Activated CD4-positive, alpha-beta memory T cell treated with anti-CD3 and anti-CD28 coated beads for 36 hours (primary cell): ENCODE measurements at regions of chr14 and their contacts with region 1.

Region 1: DNA sequence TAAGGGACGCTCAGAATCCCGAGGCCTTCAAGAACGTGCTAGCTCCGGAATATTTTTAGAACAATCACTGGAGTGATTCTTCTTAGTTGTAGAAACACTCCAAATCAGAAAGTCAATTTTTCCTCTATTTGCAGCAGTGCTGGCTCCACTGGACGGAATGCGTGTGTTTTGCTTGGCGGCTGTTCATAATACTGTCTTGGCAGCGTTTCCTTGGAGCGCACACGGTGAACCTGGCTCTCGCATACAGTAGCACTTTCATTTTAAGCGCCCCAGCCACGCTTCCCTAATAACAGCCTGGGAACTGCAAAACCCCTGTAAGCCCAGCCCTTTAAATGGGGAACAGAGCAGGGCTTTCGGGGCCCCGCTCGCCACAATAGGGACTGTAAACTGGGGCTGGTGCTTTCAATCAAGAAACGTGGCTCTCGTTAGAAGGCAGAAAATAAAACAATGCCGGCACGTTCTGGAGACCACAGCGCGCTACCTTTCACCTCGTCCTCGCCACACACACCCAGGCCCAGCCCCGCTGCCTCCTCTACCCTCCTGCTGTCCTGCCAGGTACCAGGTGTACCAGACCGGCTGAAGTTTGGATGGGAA is 79.9 kb downstream of the BCL11B start:
- DNase-seq: peak; percentile 56
- H3K4me3 Mint-ChIP-seq: peak overlapping the region; percentile 84
- H3K27ac Mint-ChIP-seq: peak overlapping the region; percentile 88
- H3K4me1 Mint-ChIP-seq: peaks cover 92% of the 10 kb centered on the region
- H3K27me3 Mint-ChIP-seq: no peaks in the 10 kb centered on the region

Region 2: GRCh38 chr14:98138666-98139065 is 1053.5 kb before region 1 on chr14:
- CTCF ChIA-PET with region 1: interaction called, 3 read pairs
- POLR2A ChIA-PET with region 1: no interaction called
- intact Hi-C with region 1: loop called (anchors 2 kb)
- DNase-seq: peak; percentile 73
- H3K4me3 Mint-ChIP-seq: peak overlapping the region; percentile 42
- H3K27ac Mint-ChIP-seq: peak overlapping the region; percentile 80
- H3K4me1 Mint-ChIP-seq: peaks cover 76% of the 10 kb centered on the region
- H3K27me3 Mint-ChIP-seq: no peaks in the 10 kb centered on the region

Region 3: GRCh38 chr14:98931911-98932310 is 260.2 kb before region 1 on chr14:
- CTCF ChIA-PET with region 1: interaction called, 3 read pairs
- POLR2A ChIA-PET with region 1: no interaction called
- intact Hi-C with region 1: loop called (anchors 5 kb)
- DNase-seq: peak; percentile 81
- H3K4me3 Mint-ChIP-seq: peak overlapping the region; percentile 49
- H3K27ac Mint-ChIP-seq: peak overlapping the region; percentile 71
- H3K4me1 Mint-ChIP-seq: peaks cover 58% of the 10 kb centered on the region
- H3K27me3 Mint-ChIP-seq: no peaks in the 10 kb centered on the region

Region 4: DNA sequence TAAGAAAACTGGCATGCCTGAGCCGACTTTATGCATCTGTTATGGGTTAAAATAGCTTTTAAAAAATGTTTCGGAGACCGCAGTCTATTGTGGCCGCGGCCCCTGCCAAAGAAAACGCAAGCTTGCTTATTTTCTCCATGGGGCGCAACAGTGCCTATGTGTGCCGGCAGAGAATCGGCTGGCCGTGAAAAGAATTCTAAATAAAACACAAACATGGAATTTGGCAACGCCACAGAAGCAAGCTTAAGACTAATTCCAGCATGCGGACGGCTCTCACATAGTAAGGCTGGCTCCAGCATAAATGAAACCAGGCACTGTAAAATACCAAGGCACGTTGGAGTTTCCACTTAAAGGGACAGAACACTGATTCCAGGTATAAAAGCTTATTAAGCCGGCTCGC is 23.2 kb after region 1 on chr14:
- CTCF ChIA-PET with region 1: interaction called, 10 read pairs
- POLR2A ChIA-PET with region 1: interaction called, 10 read pairs
- intact Hi-C with region 1: loop called (anchors 2 kb)
- DNase-seq: no peak
- H3K4me3 Mint-ChIP-seq: peak overlapping the region; percentile 70
- H3K27ac Mint-ChIP-seq: peak overlapping the region; percentile 91
- H3K4me1 Mint-ChIP-seq: peaks cover 93% of the 10 kb centered on the region
- H3K27me3 Mint-ChIP-seq: no peaks in the 10 kb centered on the region

Region 5: DNA sequence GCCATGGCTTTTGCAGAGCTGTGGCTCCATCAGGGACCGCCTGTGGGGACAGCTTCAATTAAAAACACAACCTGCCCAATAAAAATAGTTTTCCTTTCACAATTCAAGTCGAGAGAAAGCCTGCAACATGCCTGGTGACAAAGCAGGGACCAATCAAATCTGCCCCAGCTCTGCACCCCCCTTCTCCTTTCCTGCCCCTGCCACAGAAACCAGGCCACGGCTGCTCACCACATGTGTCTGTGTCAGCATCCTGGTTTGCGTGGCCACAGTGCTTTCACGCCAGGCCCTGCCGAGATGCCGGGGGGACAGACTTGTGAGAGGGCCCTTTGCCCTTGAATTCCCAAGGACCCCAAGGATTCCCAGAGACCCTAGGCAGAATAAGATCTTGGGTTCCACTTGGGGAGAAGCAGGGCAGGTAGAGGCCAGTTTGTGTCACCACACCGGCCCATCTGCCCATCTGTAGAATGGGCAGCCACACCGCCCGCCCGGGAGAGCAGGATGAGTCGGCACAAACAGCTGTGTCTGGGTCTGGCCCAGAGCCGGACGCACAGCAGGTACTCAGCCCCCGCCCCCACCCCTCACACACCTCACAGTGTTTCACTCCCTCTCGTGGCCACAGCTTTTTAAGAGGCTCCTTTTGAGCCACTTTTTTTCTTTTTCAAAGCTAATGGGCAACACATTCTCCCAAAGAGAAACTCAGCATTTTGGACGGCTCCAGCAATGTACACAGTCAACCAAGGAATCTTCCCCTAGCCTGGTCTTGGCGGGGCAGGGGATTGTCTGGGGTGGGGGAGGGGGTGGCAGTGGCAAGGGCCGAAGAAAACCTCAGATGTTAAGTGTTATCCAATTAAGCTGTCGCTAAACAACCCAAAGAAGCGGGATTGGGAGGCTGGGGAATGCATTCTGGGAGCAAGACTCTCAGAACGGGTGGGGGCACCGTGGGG is 38.4 kb after region 1 on chr14:
- CTCF ChIA-PET with region 1: interaction called, 61 read pairs
- POLR2A ChIA-PET with region 1: interaction called, 24 read pairs
- intact Hi-C with region 1: loop called (anchors 1 kb)
- DNase-seq: peak; percentile 94
- H3K4me3 Mint-ChIP-seq: peak overlapping the region; percentile 68
- H3K27ac Mint-ChIP-seq: peak overlapping the region; percentile 96
- H3K4me1 Mint-ChIP-seq: peaks cover 95% of the 10 kb centered on the region
- H3K27me3 Mint-ChIP-seq: no peaks in the 10 kb centered on the region

Region 6: GRCh38 chr14:99245564-99246511 is 53.7 kb after region 1 on chr14:
- CTCF ChIA-PET with region 1: interaction called, 3 read pairs
- POLR2A ChIA-PET with region 1: interaction called, 10 read pairs
- intact Hi-C with region 1: no loop called
- DNase-seq: no peak
- H3K4me3 Mint-ChIP-seq: peak overlapping the region; percentile 75
- H3K27ac Mint-ChIP-seq: peak overlapping the region; percentile 96
- H3K4me1 Mint-ChIP-seq: peaks cover 74% of the 10 kb centered on the region
- H3K27me3 Mint-ChIP-seq: no peaks in the 10 kb centered on the region

Region 7: GRCh38 chr14:99415496-99416281 is 223.6 kb after region 1 on chr14:
- CTCF ChIA-PET with region 1: no interaction called
- POLR2A ChIA-PET with region 1: no interaction called
- intact Hi-C with region 1: loop called (anchors 10 kb)
- DNase-seq: peak; percentile 70
- H3K4me3 Mint-ChIP-seq: no peak overlapping the region
- H3K27ac Mint-ChIP-seq: no peak overlapping the region
- H3K4me1 Mint-ChIP-seq: peaks cover 28% of the 10 kb centered on the region
- H3K27me3 Mint-ChIP-seq: no peaks in the 10 kb centered on the region